ENCODE measurements at regions of chr1 and their contacts with region 1.

Region 1: DNA sequence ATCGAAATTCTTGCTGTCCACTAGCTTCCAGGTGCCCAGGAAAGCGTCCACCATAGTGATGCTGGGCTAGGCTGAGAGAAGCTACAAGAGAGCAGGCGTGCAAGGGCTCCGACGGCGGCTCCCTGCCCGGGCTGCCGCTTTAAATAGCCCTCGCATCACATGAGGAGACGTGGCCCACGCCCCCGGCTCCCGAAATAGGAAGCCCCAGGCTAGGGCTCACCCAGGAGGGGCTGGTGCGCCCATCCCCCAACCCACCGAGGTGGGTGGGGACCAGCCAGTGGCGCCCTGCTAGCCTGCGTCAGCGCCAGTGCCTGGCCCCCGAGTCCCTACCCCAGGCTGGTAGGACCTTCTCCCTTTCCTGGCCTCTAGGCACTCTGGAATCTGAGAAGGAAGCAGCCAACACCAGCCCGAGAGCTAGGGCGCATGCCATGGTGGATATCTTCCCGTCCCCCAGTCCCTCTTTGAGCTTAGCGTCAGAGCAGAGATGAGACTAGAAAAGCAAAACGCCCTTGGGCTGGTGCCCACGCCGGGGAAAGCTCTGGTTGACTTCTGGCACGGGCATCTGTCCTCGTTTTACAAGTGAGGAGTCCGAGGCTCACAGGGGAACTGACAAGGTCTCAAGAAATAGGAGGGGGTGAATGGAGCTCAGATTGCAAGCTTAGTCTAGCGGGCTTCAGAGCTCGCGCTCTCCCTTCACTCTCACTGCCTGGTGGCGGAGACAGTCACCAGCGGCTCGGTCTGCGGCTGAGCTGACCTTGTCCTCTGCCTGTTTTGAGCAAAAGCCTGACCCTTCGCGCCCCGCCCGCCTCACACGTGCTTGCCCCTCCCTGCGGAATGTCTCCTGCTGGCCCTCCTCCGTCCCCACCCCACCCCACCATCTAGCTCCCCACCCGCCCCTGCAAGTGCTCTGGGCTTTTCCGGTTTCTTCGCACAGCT is at the start of gene FABP3:
- DNase-seq: no peak
- ATAC-seq: peak; percentile 62
- H3K4me3 ChIP-seq: no peak within 1 kb of the TSS
- H3K27ac ChIP-seq: no peak within 1 kb of the TSS
- H3K4me1 ChIP-seq: no peaks in the 10 kb centered on the region
- H3K27me3 ChIP-seq: no peaks in the 10 kb centered on the region
- CTCF ChIP-seq: no peak
- total RNA-seq, gene FABP3: 0.49 TPM

Region 2: GRCh38 chr1:31394628-31395193 is 21.5 kb after region 1 on chr1:
- CTCF ChIA-PET with region 1: interaction called, 11 read pairs
- POLR2A ChIA-PET with region 1: interaction called, 7 read pairs
- in situ Hi-C with region 1: no loop called
- intact Hi-C with region 1: no loop called
- DNase-seq: peak; percentile 55
- ATAC-seq: peak; percentile 94
- H3K4me3 ChIP-seq: peak overlapping the region; percentile 33 to 61
- H3K27ac ChIP-seq: no peak overlapping the region
- H3K4me1 ChIP-seq: peaks cover 4% of the 10 kb centered on the region; the same call in 1 of the 2 replicates
- H3K27me3 ChIP-seq: no peaks in the 10 kb centered on the region
- CTCF ChIP-seq: peak; percentile 96

Region 3: DNA sequence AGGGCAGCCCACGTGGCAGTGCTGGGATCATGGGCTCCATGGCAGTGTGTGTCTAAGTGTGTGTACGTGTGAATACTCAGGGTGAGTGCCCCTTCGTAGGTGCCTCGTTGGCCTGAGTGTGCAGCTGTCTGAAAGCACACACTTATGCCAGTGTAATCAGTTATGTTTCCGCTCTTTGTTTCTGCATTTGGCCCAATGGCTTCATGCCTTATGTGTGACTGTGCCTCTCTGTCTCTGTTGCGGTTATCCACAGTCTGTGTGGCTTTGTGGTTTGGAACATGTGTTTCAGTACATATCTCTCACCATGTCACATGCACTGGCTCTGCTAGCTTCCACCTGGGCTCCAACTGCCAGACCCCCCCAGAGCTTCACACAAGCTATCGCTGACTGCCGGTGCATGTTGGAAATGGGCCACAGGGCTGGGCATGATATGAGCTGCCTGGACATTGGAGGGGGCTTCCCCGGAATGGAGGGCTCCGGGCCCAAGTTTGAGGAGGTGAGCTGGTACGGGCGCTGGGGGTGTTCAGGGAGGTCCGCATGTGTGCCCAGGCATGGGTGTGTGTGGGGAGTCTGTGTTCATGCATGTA is 132.8 kb after region 1 on chr1:
- CTCF ChIA-PET with region 1: no interaction called
- POLR2A ChIA-PET with region 1: no interaction called
- in situ Hi-C with region 1: no loop called
- intact Hi-C with region 1: no loop called
- DNase-seq: no peak
- ATAC-seq: no peak
- H3K4me3 ChIP-seq: no peak overlapping the region
- H3K27ac ChIP-seq: no peak overlapping the region
- H3K4me1 ChIP-seq: no peaks in the 10 kb centered on the region
- H3K27me3 ChIP-seq: no peaks in the 10 kb centered on the region
- CTCF ChIP-seq: no peak

Region 4: DNA sequence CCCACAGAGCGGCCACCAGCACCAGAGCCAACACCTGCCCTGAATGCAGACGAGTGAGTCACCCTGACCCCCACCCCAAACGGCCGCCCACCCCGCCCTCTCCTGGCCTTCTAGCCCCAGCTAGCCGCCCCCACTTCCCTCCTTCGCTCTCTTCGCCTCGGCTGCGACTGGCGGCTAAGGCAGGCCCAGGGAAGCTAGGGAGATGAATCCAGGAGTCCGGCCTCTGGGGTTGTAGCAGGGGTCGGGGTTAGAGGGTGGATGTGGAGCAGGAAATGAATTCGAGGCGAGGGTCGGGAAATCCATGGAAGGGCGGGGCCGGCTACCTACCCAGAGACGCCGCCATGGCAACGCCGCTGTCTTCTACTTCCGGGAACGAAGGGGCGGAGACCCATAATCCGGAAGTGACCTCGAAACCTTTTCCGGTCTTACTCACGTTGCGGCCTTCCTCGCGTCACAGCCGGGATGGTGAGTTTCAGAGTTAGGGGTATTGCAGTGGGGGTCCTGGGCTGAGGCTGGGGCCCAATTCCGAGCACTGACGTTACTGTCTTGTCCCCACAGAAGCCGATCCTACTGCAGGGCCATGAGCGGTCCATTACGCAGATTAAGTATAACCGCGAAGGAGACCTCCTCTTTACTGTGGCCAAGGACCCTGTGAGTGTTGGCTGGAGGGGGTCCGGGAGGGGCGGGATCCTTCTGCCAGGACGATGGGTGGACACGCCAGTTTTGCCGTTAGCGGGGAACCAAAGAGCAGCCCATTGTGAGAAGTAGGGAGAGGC is 848.9 kb after region 1 on chr1 and contains the starts of genes EIF3I and TMEM234:
- CTCF ChIA-PET with region 1: no interaction called
- POLR2A ChIA-PET with region 1: no interaction called
- in situ Hi-C with region 1: no loop called
- intact Hi-C with region 1: no loop called
- DNase-seq: no peak
- ATAC-seq: peak; percentile 99
- H3K4me3 ChIP-seq: peak within 1 kb of the TSS; percentile 95 to 99
- H3K27ac ChIP-seq: peak within 1 kb of the TSS; percentile 98
- H3K4me1 ChIP-seq: peaks cover 19% of the 10 kb centered on the region
- H3K27me3 ChIP-seq: no peaks in the 10 kb centered on the region
- CTCF ChIP-seq: no peak
- total RNA-seq, gene EIF3I: 294 TPM
- total RNA-seq, gene TMEM234: 23.3 TPM